HEK293 (cell line): ENCODE measurements at regions of chrX and their contacts with region 1.

Region 1: DNA sequence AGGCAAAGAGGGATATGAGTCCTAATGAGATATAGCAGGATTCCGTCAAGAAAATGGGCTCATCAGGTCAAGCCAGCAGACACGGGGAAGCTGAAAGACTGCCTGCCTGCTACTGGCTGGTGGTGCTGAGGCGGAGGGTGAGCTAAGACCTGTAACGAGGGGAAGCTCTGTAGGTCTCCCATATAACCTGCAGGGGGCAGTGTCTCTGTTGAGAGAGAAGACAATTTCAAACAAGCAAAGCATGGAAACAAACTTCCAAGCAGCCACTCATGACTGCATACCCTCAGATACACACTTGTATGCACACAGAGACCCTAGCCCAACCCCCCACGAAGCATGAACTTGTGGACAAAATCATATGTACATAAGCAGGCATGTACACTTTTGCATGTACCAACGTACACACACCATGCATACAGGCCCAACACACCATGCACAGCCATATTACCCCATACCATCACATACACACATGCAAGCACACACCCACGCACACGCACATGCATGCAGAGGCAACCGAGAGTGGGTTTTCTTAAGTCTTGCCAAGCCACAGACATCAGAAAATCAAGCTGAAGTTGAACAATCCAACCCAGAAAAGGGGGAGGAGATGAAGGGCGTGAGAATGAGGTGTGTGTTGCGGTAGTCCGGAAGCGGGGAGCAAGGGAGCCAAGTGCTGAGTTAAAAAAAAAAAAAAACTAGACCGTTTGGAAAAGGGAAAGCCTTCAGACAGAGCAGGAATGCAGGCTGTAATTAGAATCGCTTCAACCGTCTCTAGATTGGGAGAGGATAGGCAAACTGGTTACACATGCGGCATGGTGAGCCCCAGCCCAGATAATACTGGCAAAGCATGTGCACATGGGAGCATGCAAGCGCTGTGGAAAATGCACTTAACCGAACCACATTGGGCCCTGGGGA is 71.0 kb downstream of the PJA1 start:
- H3K4me3 ChIP-seq: no peak overlapping the region
- H3K27ac ChIP-seq: no peak overlapping the region
- H3K4me1 ChIP-seq: no peaks in the 10 kb centered on the region
- CTCF ChIP-seq: peak; percentile 60; the same call in 1 of the 2 replicates

Region 2: GRCh38 chrX:68912113-68912512 is 182.1 kb before region 1 on chrX:
- CTCF ChIA-PET with region 1: no interaction called
- POLR2A ChIA-PET with region 1: no interaction called
- H3K4me3 ChIP-seq: no peak overlapping the region
- H3K27ac ChIP-seq: no peak overlapping the region
- H3K4me1 ChIP-seq: no peaks in the 10 kb centered on the region; the same call in 1 of the 2 replicates
- CTCF ChIP-seq: no peak

Region 3: GRCh38 chrX:69077895-69078455 is 16.2 kb before region 1 on chrX:
- CTCF ChIA-PET with region 1: interaction called, 11 read pairs
- POLR2A ChIA-PET with region 1: no interaction called
- H3K4me3 ChIP-seq: no peak overlapping the region
- H3K27ac ChIP-seq: peak overlapping the region; percentile 56
- H3K4me1 ChIP-seq: peaks cover 15% of the 10 kb centered on the region
- CTCF ChIP-seq: no peak

Region 4: GRCh38 chrX:69083334-69083733 is 10.9 kb before region 1 on chrX:
- CTCF ChIA-PET with region 1: interaction called, 10 read pairs
- POLR2A ChIA-PET with region 1: no interaction called
- H3K4me3 ChIP-seq: no peak overlapping the region
- H3K27ac ChIP-seq: peak overlapping the region; percentile 68
- H3K4me1 ChIP-seq: peaks cover 13% of the 10 kb centered on the region
- CTCF ChIP-seq: no peak

Region 5: GRCh38 chrX:69109683-69110082 is 15.5 kb after region 1 on chrX:
- CTCF ChIA-PET with region 1: interaction called, 37 read pairs
- POLR2A ChIA-PET with region 1: interaction called, 4 read pairs
- H3K4me3 ChIP-seq: no peak overlapping the region
- H3K27ac ChIP-seq: no peak overlapping the region
- H3K4me1 ChIP-seq: peaks cover 6% of the 10 kb centered on the region; the same call in 1 of the 2 replicates
- CTCF ChIP-seq: no peak

Region 6: DNA sequence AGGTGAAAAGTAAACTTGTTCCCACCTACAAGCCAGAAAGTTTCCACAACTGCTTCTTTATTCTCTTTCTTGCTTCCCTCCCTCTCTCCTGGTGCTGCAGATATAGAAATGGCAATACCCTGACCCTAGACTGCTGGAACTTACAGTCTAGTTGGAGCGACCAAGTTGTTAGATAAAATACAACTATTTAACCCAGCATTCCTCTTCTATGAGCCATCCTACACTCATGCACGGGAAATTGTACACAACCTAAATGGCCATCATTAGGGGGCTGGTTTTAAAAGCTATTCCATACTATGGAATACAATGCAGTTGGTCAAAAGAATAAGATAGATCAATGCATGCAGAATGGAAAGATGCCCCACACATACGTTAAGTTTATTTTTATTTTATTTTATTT is 29.9 kb after region 1 on chrX:
- CTCF ChIA-PET with region 1: interaction called, 12 read pairs
- POLR2A ChIA-PET with region 1: no interaction called
- H3K4me3 ChIP-seq: no peak overlapping the region
- H3K27ac ChIP-seq: no peak overlapping the region
- H3K4me1 ChIP-seq: no peaks in the 10 kb centered on the region
- CTCF ChIP-seq: no peak